K562 (cell line): ENCODE measurements at regions of chr15 and their contacts with region 1.

Region 1: GRCh38 chr15:43625106-43625505 is 6.5 kb upstream of the STRC start:
- DNase-seq: no peak
- ATAC-seq: no peak
- H3K4me3 ChIP-seq: no peak overlapping the region
- H3K27ac ChIP-seq: no peak overlapping the region
- H3K4me1 ChIP-seq: no peaks in the 10 kb centered on the region
- H3K27me3 ChIP-seq: no peaks in the 10 kb centered on the region
- CTCF ChIP-seq: no peak
- EP300 ChIP-seq: no peak
- POLR2A ChIP-seq: no peak
- RAD21 ChIP-seq: no peak

Region 2: GRCh38 chr15:43723151-43723550 is 98.0 kb after region 1 on chr15:
- CTCF ChIA-PET with region 1: no interaction called
- POLR2A ChIA-PET with region 1: no interaction called
- in situ Hi-C with region 1: loop called (anchors 5 kb)
- intact Hi-C with region 1: no loop called
- DNase-seq: no peak
- ATAC-seq: no peak
- H3K4me3 ChIP-seq: no peak overlapping the region
- H3K27ac ChIP-seq: no peak overlapping the region
- H3K4me1 ChIP-seq: no peaks in the 10 kb centered on the region
- H3K27me3 ChIP-seq: no peaks in the 10 kb centered on the region; a peak in 1 of 5 replicates
- CTCF ChIP-seq: no peak
- EP300 ChIP-seq: no peak
- POLR2A ChIP-seq: no peak
- RAD21 ChIP-seq: no peak

Region 3: DNA sequence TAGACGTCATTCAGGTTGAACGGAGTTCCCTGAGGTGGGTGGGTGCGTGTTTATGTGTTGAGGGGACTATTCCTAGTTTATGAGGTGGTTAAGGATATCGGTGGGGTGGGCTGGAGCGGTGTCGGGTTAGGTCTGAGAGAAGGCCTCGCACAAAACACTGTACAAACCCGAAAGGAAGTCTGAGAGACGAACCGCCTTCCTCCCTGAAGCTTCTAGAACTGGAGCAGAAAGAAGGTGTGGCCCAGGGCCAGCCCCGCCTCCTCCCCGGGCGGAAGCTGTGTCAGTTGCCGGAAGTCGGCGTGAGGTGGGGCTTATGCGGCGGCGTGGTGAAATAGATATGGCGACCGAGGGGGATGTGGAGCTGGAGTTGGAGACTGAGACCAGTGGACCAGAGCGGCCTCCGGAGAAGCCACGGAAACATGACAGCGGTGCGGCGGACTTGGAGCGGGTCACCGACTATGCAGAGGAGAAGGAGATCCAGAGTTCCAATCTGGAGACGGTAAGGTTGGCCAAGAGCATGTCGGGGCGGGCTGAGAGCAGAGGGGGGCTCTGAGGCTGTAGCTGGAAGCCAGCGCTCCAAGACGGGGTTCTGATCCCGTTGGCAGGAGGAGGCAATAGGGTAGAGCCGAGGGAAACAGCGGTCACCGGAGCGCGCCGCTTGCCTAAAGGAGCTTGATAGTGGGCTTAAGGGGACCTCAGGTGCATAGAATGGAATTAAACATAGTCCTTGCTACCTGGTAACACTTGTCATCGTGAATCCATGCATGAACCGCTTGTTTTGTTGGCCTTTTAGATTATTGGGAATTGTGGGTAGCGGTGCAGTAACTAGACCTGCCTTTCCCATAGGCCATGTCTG is 175.4 kb after region 1 on chr15 and contains the start of gene HYPK:
- CTCF ChIA-PET with region 1: no interaction called
- POLR2A ChIA-PET with region 1: no interaction called
- in situ Hi-C with region 1: no loop called
- intact Hi-C with region 1: no loop called
- DNase-seq: peak; percentile 85 to 95 (median 88)
- ATAC-seq: peak; percentile 94
- H3K4me3 ChIP-seq: peak within 1 kb of the TSS; percentile 78
- H3K27ac ChIP-seq: peak within 1 kb of the TSS; percentile 81
- H3K4me1 ChIP-seq: peaks cover 19 to 24% of the 10 kb centered on the region in 2 experiments
- H3K27me3 ChIP-seq: no peaks in the 10 kb centered on the region
- CTCF ChIP-seq: no peak
- EP300 ChIP-seq: no peak
- POLR2A ChIP-seq: peak; percentile 97
- RAD21 ChIP-seq: no peak
- polyA plus RNA-seq, gene HYPK: 9.6 TPM